ENCODE measurements at regions of chr1 and their contacts with region 1.

Region 1: DNA sequence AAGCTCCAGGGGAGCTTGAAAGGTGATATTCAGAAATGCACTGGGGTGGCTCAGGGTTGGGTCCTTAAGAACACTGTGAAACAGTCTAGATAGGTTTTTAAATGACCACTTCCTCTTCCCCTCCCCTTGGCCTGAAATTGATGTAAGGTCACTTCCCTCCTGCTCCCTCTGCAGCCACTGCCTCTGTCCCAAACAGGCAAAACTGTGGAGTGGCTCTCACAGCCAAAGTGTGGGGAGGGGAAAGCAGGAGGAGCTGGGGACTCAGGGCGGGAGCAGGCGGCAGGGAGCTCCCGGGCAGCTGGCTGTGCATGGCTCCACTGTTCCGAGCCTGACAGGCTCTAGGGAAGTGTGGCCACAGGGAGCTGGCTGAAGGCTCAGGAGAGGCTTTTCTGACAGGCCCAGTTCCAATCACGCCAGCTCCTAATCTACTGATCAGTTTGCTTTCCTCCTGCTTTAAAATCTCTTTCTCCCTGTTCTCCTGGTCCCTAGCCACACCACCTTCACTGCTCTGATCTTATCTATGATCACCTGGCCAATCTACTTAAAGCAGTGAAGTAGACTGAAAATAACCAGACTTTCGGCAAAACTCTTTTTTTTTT is 5.1 kb upstream of the CSRP1 start:
- DNase-seq: no peak
- ATAC-seq: peak; percentile 30 to 45; a peak in 3 of 6 replicates
- H3K4me3 ChIP-seq: no peak overlapping the region
- H3K27ac ChIP-seq: peak overlapping the region; percentile 48 to 69; a peak in 5 of 6 replicates
- H3K4me1 ChIP-seq: peaks cover 38% of the 10 kb centered on the region
- CTCF ChIP-seq: no peak
- EP300 ChIP-seq: no peak
- POLR2A ChIP-seq: no peak
- RAD21 ChIP-seq: no peak

Region 2: DNA sequence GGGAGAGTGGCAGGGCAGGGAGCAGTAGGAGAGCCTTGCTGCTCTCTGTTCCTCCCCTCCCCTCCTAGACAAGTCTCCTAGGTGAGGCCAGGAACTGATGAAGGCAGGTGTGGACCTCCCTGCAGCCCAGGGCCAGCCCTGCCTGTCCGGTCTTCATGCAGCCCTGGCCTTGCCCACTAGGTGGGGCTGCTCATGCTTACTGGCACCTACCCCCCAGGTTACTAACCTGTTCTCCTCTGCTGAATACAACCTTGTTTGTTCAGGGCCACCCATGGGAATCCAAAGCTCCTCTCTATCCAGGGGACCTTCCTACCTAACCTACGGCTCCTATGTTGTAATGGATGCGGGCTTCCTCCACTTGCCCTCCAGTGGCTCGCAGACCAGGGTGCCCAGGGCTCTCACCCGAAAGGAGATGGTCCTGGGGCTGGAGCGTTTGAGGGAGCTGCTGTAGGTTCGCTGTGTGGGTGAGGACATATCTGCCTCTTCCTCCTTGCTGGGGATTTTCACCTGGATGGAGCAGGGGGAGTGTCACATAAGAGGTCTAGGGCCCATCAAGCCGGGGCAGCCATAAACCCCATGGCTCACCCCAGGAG is 126.6 kb before region 1 on chr1:
- CTCF ChIA-PET with region 1: interaction called, 10 read pairs
- POLR2A ChIA-PET with region 1: no interaction called
- DNase-seq: peak; percentile 61 to 76
- ATAC-seq: peak; percentile 85 to 95
- H3K4me3 ChIP-seq: no peak overlapping the region
- H3K27ac ChIP-seq: peak overlapping the region; percentile 63 to 77
- H3K4me1 ChIP-seq: peaks cover 32% of the 10 kb centered on the region
- CTCF ChIP-seq: peak; percentile 93
- EP300 ChIP-seq: no peak
- POLR2A ChIP-seq: no peak
- RAD21 ChIP-seq: peak; percentile 81 to 84

Region 3: GRCh38 chr1:201463071-201463552 is 48.9 kb before region 1 on chr1:
- CTCF ChIA-PET with region 1: interaction called, 376 read pairs
- POLR2A ChIA-PET with region 1: interaction called, 10 read pairs
- DNase-seq: peak in 1 of 2 experiments; percentile 57
- ATAC-seq: peak; percentile 48 to 56
- H3K4me3 ChIP-seq: no peak overlapping the region
- H3K27ac ChIP-seq: peak overlapping the region; percentile 98 to 99
- H3K4me1 ChIP-seq: peaks cover 80% of the 10 kb centered on the region
- CTCF ChIP-seq: peak; percentile 24; the same call in 1 of the 3 replicates
- EP300 ChIP-seq: no peak
- POLR2A ChIP-seq: no peak
- RAD21 ChIP-seq: peak; percentile 48 to 54

Region 4: GRCh38 chr1:201481761-201482493 is 30.1 kb before region 1 on chr1:
- CTCF ChIA-PET with region 1: interaction called, 1,452 read pairs
- POLR2A ChIA-PET with region 1: interaction called, 32 read pairs
- DNase-seq: peak; percentile 86 to 92
- ATAC-seq: peak; percentile 55 to 83
- H3K4me3 ChIP-seq: no peak overlapping the region
- H3K27ac ChIP-seq: peak overlapping the region; percentile 77 to 86
- H3K4me1 ChIP-seq: peaks cover 50% of the 10 kb centered on the region
- CTCF ChIP-seq: peak; percentile 93
- EP300 ChIP-seq: no peak
- POLR2A ChIP-seq: no peak
- RAD21 ChIP-seq: peak; percentile 97 to 98

Region 5: GRCh38 chr1:201538612-201539551 is 26.8 kb after region 1 on chr1 and contains the start of gene NAV1:
- CTCF ChIA-PET with region 1: interaction called, 1,452 read pairs
- POLR2A ChIA-PET with region 1: no interaction called
- DNase-seq: peak; percentile 52 to 71
- ATAC-seq: peak; percentile 64 to 85
- H3K4me3 ChIP-seq: peak within 1 kb of the TSS; percentile 77
- H3K27ac ChIP-seq: peak within 1 kb of the TSS; percentile 64 to 92
- H3K4me1 ChIP-seq: peaks cover 40% of the 10 kb centered on the region
- CTCF ChIP-seq: no peak
- EP300 ChIP-seq: no peak
- POLR2A ChIP-seq: no peak; the same call in none of the 2 replicates
- RAD21 ChIP-seq: no peak
- polyA plus RNA-seq, gene NAV1: 3.7 and 6.4 TPM in 2 replicates

Measured in A549 (cell line).